ENCODE measurements at regions of chr1 and their contacts with region 1.

Region 1: GRCh38 chr1:202625416-202626360 is 84.6 kb downstream of the SYT2 start:
- DNase-seq: peak; percentile 80
- H3K4me3 Mint-ChIP-seq: no peak overlapping the region
- H3K27ac Mint-ChIP-seq: no peak overlapping the region
- H3K4me1 Mint-ChIP-seq: no peaks in the 10 kb centered on the region
- H3K27me3 Mint-ChIP-seq: peaks cover 21% of the 10 kb centered on the region
- CTCF ChIP-seq: peak; percentile 97

Region 2: GRCh38 chr1:202501281-202501680 is 124.4 kb before region 1 on chr1:
- CTCF ChIA-PET with region 1: interaction called, 5 read pairs
- POLR2A ChIA-PET with region 1: interaction called, 3 read pairs
- intact Hi-C with region 1: loop called (anchors 1 kb)
- DNase-seq: peak; percentile 64
- H3K4me3 Mint-ChIP-seq: no peak overlapping the region
- H3K27ac Mint-ChIP-seq: no peak overlapping the region
- H3K4me1 Mint-ChIP-seq: peaks cover 10% of the 10 kb centered on the region
- H3K27me3 Mint-ChIP-seq: no peaks in the 10 kb centered on the region
- CTCF ChIP-seq: peak; percentile 89

Measured in MCF 10A (cell line).